ENCODE measurements at regions of chr6 and their contacts with region 1.

Region 1: GRCh38 chr6:54665278-54665677 is 181.3 kb upstream of the FAM83B start:
- DNase-seq: no peak
- ATAC-seq: no peak

Region 2: DNA sequence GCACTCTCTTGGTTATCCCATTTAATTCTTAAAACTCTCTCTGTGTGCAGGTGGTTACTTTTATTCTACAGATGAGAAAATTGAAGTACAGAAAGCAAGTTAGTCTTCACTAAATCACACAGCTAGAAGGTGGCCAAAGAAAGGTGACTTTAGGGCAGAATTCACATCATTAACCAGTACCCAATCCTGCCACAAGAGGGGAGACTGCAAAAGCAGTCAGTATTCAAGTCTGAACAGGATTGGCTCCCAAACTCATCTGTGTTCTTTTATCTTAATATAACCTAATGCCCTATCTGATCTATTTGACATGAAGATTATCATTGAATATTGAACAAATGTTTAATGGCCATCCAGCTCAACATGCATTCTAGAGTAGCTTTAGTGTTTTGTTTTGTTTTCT is 44.0 kb before region 1 on chr6:
- intact Hi-C with region 1: loop called (anchors 2 kb)
- DNase-seq: no peak
- ATAC-seq: no peak

Region 3: DNA sequence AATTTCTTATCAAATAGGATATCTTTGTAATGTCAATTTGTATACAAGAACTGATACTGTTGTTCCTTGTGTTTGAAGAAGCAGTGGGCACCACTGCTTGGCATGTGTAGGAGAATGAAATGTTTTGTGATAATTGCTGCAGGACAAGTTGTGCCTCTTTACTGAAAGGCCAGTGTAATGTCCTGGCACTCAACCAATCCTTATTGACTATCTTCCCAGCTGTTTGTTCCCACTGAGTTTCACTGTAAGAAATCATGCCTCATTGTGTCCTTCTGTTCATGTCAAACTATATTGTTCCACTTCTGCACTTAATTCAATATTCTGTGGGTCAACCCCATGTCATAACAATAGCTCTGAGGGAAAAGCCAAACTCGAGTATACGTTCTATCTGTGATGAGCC is 45.2 kb after region 1 on chr6:
- intact Hi-C with region 1: no loop called
- DNase-seq: no peak
- ATAC-seq: no peak

Region 4: GRCh38 chr6:55963301-55963700 is 1298.0 kb after region 1 on chr6:
- intact Hi-C with region 1: no loop called
- DNase-seq: no peak
- ATAC-seq: no peak